Heart left ventricle (tissue), 16 donors: ENCODE measurements at regions of chr20 and their contacts with region 1.

Region 1: DNA sequence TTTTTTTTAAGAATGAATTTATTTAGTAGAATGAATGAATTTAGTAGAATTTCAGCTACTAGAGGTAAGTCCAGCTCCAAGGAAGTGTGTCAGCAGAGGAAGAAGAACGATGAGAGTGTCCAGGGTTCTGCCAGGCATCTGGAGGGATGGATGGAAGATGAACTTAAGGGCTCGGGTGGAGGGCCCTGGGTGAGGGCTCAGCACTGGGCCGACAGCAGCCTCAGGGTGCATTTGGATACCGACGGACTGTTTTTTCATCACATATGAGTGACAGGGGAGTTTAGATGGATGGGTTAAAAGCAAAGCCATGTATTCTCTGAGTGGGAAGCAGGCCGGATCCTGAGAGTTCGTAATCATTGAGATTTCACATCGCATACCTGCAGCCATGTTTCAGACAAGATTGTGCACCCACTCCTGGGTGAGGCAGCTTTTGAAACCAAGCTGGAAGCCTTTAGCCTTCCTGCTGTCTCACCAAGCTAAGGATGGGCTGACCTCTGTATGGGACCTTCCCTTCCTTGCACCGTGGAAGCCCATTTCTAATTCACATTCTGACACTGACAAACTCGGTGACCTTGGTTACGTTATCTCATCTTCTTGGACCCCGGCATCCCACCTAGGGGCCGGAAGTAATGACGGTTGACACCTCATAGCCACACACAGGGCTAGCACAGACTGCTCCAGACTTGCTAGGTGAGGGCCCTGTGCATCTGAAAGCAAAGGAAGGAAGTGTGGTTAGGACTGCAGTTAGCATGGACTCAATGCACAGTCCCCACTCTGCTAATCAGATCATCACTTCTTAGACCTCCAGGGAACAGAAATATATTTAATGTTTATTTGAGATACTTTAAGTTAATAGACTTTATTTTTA is 228.5 kb downstream of the SLC24A3 start:
- DNase-seq: no peak
- ATAC-seq: no peak
- H3K4me3 ChIP-seq: no peak overlapping the region
- H3K27ac ChIP-seq: no peak overlapping the region
- H3K4me1 ChIP-seq: no peaks in the 10 kb centered on the region
- H3K27me3 ChIP-seq: no peaks in the 10 kb centered on the region
- CTCF ChIP-seq: no peak
- POLR2A ChIP-seq: no peak

Region 2: DNA sequence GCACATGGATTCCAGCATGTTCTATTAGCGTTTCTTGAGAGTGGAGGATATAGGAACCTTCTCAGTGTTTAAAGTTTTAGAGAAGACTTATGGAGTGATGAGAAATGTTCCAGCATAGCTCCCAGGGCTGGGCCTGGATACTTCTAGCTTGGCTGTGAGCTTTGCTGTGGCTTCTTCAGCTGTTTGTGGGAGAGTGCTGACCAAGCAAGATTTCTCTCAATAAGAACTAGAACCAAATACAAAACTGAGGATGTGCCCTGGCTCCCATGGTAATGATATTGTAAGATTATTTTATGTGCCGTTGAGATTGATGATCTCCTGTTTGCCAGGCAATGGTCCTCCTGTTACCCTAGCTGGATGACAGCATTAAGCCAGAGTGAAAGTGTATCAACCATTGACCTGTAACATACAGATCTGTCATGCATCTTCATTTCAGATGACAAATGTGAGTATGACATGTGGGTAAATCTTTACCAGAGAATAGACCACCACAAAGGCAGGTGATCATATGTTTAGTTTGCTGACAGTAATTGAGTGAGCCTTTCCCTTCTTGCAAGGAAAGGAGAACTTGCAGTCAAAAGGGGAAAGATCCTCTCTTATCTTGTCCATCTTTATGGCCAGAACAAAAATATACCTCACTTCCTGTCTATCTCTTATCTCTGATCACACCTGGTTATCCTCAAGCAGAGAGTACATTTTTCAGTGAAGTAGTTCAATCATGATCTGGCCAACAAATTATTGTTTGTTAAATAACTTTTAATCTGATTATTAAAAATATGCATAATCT is 48.4 kb before region 1 on chr20:
- intact Hi-C with region 1: loop called in 1 of 10 experiments (anchors 5 kb)
- DNase-seq: no peak
- ATAC-seq: no peak
- H3K4me3 ChIP-seq: no peak overlapping the region
- H3K27ac ChIP-seq: no peak overlapping the region
- H3K4me1 ChIP-seq: no peaks in the 10 kb centered on the region
- H3K27me3 ChIP-seq: no peaks in the 10 kb centered on the region
- CTCF ChIP-seq: no peak
- POLR2A ChIP-seq: no peak

Region 3: DNA sequence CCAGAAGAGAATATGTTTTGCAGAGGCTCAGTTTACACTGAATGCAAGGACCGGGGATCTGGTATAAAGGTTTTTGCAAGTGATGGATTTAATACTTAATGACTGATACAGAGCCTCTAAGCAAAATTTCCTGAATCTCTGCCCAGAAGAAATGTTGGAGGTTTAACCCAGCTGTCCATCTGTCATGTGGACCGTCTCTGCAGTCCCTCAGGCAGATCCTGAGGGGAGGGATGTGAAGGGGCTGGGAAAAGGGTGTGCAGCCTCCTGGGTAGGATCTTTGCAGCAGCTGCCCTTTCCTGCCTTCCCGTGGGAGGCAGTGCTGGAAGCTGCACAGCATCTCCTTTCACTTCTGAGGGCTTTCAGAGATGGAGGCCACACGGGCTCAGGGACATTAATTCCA is 21.5 kb before region 1 on chr20:
- intact Hi-C with region 1: no loop called
- DNase-seq: no peak
- ATAC-seq: no peak
- H3K4me3 ChIP-seq: no peak overlapping the region
- H3K27ac ChIP-seq: no peak overlapping the region
- H3K4me1 ChIP-seq: no peaks in the 10 kb centered on the region
- H3K27me3 ChIP-seq: no peaks in the 10 kb centered on the region
- CTCF ChIP-seq: no peak
- POLR2A ChIP-seq: no peak

Region 4: DNA sequence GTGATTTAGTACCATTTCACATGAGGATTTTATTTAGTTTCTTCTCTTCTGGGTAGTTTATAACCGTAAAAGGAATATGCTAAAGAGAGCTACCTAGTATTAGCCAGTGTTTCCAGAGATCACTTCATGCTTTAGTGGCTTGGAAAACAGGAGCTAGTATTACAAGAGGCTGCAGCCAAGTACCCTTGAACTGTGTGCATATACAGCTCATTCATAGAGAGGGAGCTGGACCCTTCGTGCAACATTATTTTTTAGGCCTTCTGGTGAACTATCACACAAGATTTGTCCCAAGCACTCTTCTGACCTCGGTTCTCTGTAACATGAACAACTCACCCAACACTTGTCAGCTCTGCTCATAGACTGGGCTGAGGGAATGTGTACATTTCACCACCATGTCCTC is 242.3 kb after region 1 on chr20:
- intact Hi-C with region 1: no loop called
- DNase-seq: no peak
- ATAC-seq: no peak
- H3K4me3 ChIP-seq: no peak overlapping the region
- H3K27ac ChIP-seq: no peak overlapping the region
- H3K4me1 ChIP-seq: peaks cover 0 to 3% (median under 1%) of the 10 kb centered on the region in 12 donors
- H3K27me3 ChIP-seq: no peaks in the 10 kb centered on the region
- CTCF ChIP-seq: no peak
- POLR2A ChIP-seq: no peak